Transverse colon (tissue), 4 donors: ENCODE measurements at regions of chr18 and their contacts with region 1.

Region 1: GRCh38 chr18:39611381-39612100 is 2045.9 kb upstream of the CELF4 start:
- DNase-seq: no peak
- H3K4me3 ChIP-seq: no peak overlapping the region
- H3K27ac ChIP-seq: no peak overlapping the region
- H3K4me1 ChIP-seq: no peaks in the 10 kb centered on the region
- H3K27me3 ChIP-seq: no peaks in the 10 kb centered on the region
- CTCF ChIP-seq: no peak
- EP300 ChIP-seq: no peak
- POLR2A ChIP-seq: no peak

Region 2: GRCh38 chr18:37900326-37900725 is 1711.2 kb before region 1 on chr18:
- in situ Hi-C with region 1: no loop called
- intact Hi-C with region 1: loop called (anchors 5 kb)
- DNase-seq: no peak
- H3K4me3 ChIP-seq: no peak overlapping the region
- H3K27ac ChIP-seq: no peak overlapping the region
- H3K4me1 ChIP-seq: no peaks in the 10 kb centered on the region
- H3K27me3 ChIP-seq: no peaks in the 10 kb centered on the region
- CTCF ChIP-seq: no peak
- EP300 ChIP-seq: no peak
- POLR2A ChIP-seq: no peak

Region 3: DNA sequence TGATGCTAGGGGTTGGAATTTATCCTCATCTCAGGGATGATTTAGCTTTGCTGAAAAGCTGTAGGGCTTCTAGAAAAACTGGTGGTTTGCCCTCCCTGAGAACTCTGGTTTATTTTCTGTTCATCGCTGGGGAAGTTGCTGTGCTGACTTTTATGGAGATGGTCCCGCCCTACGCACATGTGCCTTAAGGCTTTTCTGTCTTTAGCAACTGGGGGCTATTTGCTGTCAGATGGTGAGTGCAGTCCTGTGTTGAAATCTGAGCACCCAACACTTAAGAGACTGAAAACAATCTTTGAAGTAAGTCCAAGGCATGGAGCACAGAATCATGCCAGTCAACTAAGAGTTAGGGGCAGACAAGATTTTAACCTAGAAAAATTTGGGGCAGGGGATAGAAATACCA is 102.4 kb after region 1 on chr18:
- in situ Hi-C with region 1: no loop called
- intact Hi-C with region 1: no loop called
- DNase-seq: no peak
- H3K4me3 ChIP-seq: no peak overlapping the region
- H3K27ac ChIP-seq: no peak overlapping the region
- H3K4me1 ChIP-seq: no peaks in the 10 kb centered on the region
- H3K27me3 ChIP-seq: no peaks in the 10 kb centered on the region
- CTCF ChIP-seq: no peak
- EP300 ChIP-seq: no peak
- POLR2A ChIP-seq: no peak